PC-3 (cell line): ENCODE measurements at regions of chr11 and their contacts with region 1.

Region 1: DNA sequence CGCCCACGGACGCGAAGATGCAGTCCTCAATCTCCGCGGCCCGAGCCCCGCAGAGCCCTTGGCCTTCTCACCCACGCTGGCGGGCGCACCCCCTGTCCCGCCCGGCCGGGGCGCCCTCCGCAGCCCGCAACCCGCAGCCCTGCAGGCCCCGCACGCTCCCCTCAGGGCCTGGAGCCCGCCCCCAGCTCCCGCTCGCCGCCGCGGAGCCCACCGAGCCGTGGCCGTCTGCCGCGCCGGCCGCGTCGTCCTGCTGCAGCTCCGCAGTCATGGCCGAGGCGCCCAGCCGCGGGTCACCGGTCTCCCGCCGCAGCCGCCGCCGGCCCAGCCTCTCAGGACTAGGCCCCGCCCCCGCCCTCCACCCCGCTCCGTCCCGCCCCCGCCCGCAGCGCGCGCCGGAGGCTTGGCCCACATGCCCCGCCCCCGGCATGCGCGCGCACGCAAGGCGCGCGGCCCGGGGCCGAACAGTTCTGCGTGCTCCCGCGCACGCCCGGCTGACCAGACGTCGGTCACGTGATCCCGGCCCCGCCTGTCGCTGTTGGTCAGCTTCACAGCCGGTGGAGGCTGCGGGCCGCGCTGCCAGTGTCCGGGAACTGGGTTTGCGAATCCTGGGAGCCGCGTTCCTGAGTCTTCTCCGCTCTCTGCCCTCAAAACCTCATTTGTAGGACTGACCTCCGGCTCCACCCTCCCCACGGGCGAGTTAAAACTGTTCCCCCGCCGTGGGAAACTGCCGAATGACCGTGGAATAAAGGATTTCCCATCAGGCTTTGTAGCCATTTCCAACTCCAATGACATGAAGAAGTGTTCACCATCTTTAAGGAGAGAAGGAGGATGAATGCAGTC is at the start of gene USP28:
- DNase-seq: peak; percentile 98
- ATAC-seq: peak; percentile 89
- H3K4me3 ChIP-seq: peak within 1 kb of the TSS; percentile 98
- H3K27ac ChIP-seq: peak within 1 kb of the TSS; percentile 72
- H3K4me1 ChIP-seq: peaks cover 23% of the 10 kb centered on the region
- H3K27me3 ChIP-seq: no peaks in the 10 kb centered on the region
- CTCF ChIP-seq: no peak
- total RNA-seq, gene USP28: 27.7 and 55.8 TPM in 2 replicates

Region 2: DNA sequence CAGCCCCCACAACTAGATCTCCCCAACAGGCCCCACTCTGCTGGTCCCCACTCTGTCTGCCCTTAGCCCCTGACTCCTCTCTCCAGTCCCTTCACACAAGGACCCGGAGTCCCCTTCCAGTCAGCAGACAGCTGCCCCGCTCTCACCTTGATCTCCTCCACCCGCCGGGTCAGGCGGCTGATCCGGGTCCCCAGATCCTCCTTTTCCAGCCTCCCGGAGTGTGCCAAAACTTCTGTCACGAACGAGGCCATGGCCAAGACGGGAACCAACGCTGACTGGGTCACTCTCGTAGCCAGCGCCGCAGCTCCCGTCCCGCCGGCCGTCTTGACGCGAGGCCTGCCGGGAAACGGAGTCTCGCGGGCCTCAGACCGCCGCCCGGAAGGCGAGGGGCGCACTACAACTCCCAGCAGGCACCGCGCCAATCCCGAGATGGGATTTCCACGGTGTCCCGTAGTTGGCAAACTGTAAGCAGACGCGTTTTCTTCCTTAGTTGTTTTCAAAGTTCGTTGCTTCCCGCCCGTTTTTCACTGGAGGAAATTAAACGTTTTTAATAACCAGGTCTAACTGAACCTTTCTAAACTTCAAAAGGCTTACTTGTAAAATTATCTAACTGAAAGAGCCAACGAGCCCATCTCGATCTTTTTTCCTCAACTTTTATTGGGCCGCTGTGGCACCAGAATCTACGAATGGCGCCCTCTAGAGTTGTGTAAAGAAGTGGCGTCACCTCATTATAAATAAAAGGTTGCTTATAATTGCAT is 101.9 kb before region 1 on chr11 and contains the start of gene ZW10:
- CTCF ChIA-PET with region 1: no interaction called
- POLR2A ChIA-PET with region 1: no interaction called
- intact Hi-C with region 1: loop called (anchors 2 kb)
- DNase-seq: peak; percentile 99
- ATAC-seq: peak; percentile 98
- H3K4me3 ChIP-seq: peak within 1 kb of the TSS; percentile 91
- H3K27ac ChIP-seq: peak within 1 kb of the TSS; percentile 35
- H3K4me1 ChIP-seq: peaks cover 16% of the 10 kb centered on the region
- H3K27me3 ChIP-seq: no peaks in the 10 kb centered on the region
- CTCF ChIP-seq: peak; percentile 99
- total RNA-seq, gene ZW10: 36.5 and 38.4 TPM in 2 replicates

Region 3: DNA sequence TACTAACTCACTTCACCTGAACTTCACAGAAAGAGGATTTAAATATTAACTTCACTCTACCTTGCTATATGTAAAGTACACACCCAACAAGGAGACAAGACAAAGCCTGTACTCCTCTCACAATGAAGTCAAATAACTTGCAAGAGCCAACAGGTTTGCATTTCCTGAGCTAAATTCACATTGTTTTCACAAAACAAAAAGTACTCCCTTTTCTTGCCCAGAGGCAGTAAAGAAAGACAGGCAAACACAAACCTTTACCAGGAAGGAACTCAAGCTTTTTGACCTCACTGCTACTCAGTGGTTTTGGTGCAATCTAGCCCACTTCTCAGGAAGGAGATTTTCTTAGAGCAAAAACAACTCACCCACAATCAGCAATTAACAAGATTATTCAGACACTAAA is 15.8 kb before region 1 on chr11:
- CTCF ChIA-PET with region 1: no interaction called
- POLR2A ChIA-PET with region 1: no interaction called
- intact Hi-C with region 1: loop called (anchors 2 kb)
- DNase-seq: no peak
- ATAC-seq: peak; percentile 75
- H3K4me3 ChIP-seq: no peak overlapping the region
- H3K27ac ChIP-seq: no peak overlapping the region
- H3K4me1 ChIP-seq: peaks cover 3% of the 10 kb centered on the region; the same call in 1 of the 2 replicates
- H3K27me3 ChIP-seq: no peaks in the 10 kb centered on the region
- CTCF ChIP-seq: no peak

Region 4: DNA sequence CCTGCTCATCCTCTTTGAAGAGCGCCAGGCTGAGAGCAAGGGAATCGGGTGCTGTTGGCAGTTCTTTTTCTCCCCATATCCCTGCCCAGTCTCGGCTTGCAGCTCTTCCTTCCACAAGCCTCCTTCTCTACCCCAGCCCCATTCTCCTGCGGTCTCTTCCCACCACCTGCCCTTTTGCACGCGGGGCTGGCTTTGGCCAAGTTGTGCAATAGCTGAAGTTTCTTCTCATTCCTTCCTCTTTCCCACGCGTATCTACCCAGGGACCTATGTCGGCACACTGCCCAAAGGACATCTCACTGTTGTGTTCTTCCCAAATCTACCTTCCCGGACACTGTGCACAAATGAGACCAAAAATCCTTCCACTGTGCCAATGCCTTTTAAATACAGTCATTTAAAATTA is 77.1 kb after region 1 on chr11:
- CTCF ChIA-PET with region 1: no interaction called
- POLR2A ChIA-PET with region 1: no interaction called
- intact Hi-C with region 1: no loop called
- DNase-seq: no peak
- ATAC-seq: no peak
- H3K4me3 ChIP-seq: no peak overlapping the region
- H3K27ac ChIP-seq: no peak overlapping the region
- H3K4me1 ChIP-seq: no peaks in the 10 kb centered on the region
- H3K27me3 ChIP-seq: peaks cover 79% of the 10 kb centered on the region
- CTCF ChIP-seq: no peak

Region 5: DNA sequence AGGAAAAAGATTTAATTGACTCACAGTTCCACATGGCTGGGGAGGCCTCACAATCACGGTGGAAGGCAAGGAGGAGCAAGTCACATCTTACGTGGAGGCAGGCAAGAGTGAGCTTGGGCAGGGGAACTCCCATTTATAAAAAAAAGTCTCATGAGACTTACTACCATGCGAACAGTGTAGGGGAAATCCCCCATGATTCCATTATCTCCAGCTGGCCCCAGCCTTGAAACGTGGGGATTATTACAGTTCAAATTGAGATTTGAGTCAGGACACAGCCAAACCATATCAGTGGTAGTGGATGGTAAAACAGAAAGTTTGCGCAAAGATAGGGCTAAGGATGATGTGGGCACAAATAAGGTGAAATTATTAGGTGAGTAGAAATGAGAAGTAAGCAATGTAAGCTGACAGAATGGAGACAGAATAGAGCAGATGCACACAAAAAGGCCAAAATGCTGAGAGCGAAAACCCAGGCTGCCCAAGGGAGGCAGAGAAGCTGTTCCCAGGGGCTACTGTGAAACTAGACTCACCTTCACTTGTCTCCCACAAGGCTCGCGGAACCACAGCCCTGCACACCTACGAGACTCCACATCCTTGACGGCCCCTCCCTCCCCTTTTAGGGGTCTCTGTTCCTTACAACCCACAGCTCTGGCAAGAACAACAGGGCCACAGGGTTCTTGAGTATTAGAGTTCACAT is 1251.2 kb after region 1 on chr11:
- CTCF ChIA-PET with region 1: no interaction called
- POLR2A ChIA-PET with region 1: no interaction called
- intact Hi-C with region 1: no loop called
- DNase-seq: no peak
- ATAC-seq: no peak
- H3K4me3 ChIP-seq: no peak overlapping the region
- H3K27ac ChIP-seq: no peak overlapping the region
- H3K4me1 ChIP-seq: no peaks in the 10 kb centered on the region
- H3K27me3 ChIP-seq: no peaks in the 10 kb centered on the region
- CTCF ChIP-seq: no peak